Activated CD8-positive, alpha-beta T cell treated with anti-CD3 and anti-CD28 coated beads, Interleukin-2, amount 10 ng/mL, durations not matched to agents 7 days and 5 days (primary cell): ENCODE measurements at regions of chr1 and their contacts with region 1.

Region 1: GRCh38 chr1:91511386-91511785 is 10.7 kb downstream of the CDC7 start:
- DNase-seq: no peak
- ATAC-seq: no peak
- H3K4me3 Mint-ChIP-seq: no peak overlapping the region
- H3K27ac Mint-ChIP-seq: no peak overlapping the region
- H3K4me1 Mint-ChIP-seq: peaks cover 2% of the 10 kb centered on the region
- H3K27me3 Mint-ChIP-seq: no peaks in the 10 kb centered on the region

Region 2: GRCh38 chr1:91523482-91523881 is 12.1 kb after region 1 on chr1:
- CTCF ChIA-PET with region 1: interaction called, 18 read pairs
- POLR2A ChIA-PET with region 1: no interaction called
- DNase-seq: no peak
- ATAC-seq: no peak
- H3K4me3 Mint-ChIP-seq: no peak overlapping the region
- H3K27ac Mint-ChIP-seq: peak overlapping the region; percentile 21
- H3K4me1 Mint-ChIP-seq: peaks cover 21% of the 10 kb centered on the region
- H3K27me3 Mint-ChIP-seq: no peaks in the 10 kb centered on the region

Region 3: GRCh38 chr1:91697416-91697815 is 186.0 kb after region 1 on chr1:
- CTCF ChIA-PET with region 1: no interaction called
- POLR2A ChIA-PET with region 1: no interaction called
- DNase-seq: peak; percentile 75
- ATAC-seq: peak; percentile 93
- H3K4me3 Mint-ChIP-seq: peak overlapping the region; percentile 41
- H3K27ac Mint-ChIP-seq: peak overlapping the region; percentile 71
- H3K4me1 Mint-ChIP-seq: peaks cover 30% of the 10 kb centered on the region
- H3K27me3 Mint-ChIP-seq: peaks cover 2% of the 10 kb centered on the region

Region 4: DNA sequence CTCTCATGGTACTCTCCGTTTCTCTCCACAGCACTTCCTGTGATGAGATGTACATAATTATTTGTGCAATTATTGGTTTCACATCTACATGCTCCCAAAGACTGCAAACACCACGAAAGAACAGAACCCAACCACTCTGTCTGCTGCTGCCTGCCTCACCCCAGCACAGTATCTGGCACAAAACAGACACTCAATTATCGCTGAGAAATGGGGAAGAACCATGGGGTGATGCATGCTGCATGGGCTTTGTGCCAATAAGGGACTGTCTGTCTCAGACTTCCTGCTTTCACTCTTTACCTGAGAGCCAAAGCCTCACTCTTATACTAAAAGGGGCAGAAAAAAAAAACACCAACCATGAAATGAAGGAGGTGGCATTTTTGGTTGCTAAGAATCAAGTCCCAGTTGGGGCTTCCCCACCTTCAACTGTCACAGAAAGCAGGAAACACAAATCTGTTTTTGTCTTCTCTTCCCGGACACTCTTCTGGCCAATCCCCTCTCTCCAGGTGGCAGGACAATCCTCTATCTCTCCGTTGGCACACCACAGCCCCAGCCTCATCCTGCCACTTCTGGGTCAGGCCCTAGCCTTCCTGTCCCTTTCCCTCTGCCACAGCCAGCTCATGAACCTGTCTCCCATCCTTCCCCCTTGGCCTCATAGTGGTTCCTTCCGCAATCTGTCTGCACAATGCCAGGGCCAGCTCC is 292.6 kb after region 1 on chr1:
- CTCF ChIA-PET with region 1: interaction called, 10 read pairs
- POLR2A ChIA-PET with region 1: no interaction called
- DNase-seq: peak; percentile 73
- ATAC-seq: peak; percentile 65
- H3K4me3 Mint-ChIP-seq: peak overlapping the region; percentile 60
- H3K27ac Mint-ChIP-seq: peak overlapping the region; percentile 86
- H3K4me1 Mint-ChIP-seq: peaks cover 68% of the 10 kb centered on the region
- H3K27me3 Mint-ChIP-seq: peaks cover 21% of the 10 kb centered on the region

Region 5: DNA sequence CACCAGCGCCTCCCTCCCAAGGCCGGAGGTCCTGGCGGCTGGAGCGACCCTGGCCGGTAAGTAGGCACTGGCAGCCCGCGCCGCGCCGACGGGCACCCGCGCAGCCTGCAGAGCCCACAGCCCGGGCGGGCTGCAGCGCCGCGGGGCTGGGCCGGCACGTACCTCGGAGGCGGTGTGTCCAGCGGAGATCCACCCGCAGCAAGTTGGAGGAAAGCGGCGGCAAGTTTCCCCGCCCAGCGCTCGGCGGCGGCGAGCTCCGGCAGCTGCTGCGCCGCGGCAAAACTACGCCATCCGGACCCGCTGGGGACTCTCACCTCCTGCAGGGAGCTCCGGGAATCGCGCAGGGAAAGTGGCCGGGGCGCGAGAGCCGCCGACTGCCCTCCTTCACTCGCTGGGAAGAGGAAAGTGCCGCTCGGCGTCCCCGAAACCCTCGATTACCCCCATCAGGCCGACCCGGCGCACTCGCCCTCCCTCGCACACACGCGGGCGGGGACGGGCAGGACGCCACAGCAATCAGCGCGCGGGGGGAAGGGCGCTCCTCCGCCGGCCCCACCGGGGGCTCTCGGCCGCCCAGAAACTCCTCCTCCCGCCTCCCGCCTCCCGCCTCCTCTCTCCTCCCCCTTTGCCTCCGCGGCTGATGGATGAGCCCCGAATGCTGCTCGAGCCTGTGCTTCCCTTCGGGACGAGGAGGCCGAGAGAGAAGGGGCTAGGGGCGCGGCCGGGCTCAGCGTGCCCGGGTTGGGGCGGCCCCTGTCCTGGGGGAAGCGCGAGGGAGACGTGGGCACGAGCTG is 374.5 kb after region 1 on chr1 and contains the start of gene TGFBR3:
- CTCF ChIA-PET with region 1: interaction called, 42 read pairs
- POLR2A ChIA-PET with region 1: no interaction called
- DNase-seq: peak; percentile 67
- ATAC-seq: peak; percentile 82
- H3K4me3 Mint-ChIP-seq: peak within 1 kb of the TSS; percentile 78
- H3K27ac Mint-ChIP-seq: peak within 1 kb of the TSS; percentile 34
- H3K4me1 Mint-ChIP-seq: peaks cover 33% of the 10 kb centered on the region
- H3K27me3 Mint-ChIP-seq: peaks cover 40% of the 10 kb centered on the region
- total RNA-seq, gene TGFBR3: 3.7 to 4.0 TPM